Esophagus muscularis mucosa (tissue), 4 donors: ENCODE measurements at regions of chr2 and their contacts with region 1.

Region 1: DNA sequence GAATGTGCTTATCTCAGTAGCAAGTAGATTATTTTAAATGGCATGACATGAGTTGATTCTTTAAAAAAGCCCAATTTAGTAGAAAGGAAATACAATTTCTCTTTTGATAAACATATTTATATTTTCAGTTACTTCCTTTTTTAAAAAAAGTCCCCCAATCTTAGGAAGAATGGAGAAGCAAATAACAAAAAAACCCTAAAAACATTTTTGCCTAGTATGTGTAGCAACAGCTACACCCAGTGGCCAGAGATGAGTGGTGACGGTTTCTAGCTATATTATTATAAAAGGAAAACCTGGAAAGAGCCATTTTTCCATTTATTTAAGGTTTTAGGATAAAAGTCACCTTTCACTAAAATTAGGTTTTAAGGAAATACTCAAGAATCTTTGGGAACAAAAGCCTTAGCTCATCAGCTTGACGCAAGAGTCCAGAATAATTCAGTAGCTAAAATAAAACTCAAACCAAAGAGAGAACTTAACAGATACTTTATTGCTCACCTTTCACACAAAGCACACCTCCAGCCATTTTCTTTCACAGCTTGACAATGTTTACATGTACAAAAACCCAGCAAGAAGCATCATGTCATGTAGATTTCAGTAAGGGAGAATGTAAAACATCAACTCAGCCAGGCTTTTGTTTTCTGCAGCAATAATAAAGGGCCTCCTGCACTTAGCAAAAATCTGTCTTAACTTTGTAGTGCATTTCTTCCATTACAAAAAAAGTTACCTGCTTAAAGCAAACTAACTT is 15.7 kb downstream of the FAM98A start:
- DNase-seq: no peak
- H3K4me3 ChIP-seq: no peak overlapping the region
- H3K27ac ChIP-seq: peak overlapping the region in 2 of 4 donors; percentile 5 to 46
- H3K4me1 ChIP-seq: peaks cover 7 to 42% (median 36%) of the 10 kb centered on the region in 4 donors
- H3K27me3 ChIP-seq: no peaks in the 10 kb centered on the region
- CTCF ChIP-seq: peak; percentile 80 to 91 (median 88)
- EP300 ChIP-seq: no peak
- POLR2A ChIP-seq: no peak

Region 2: DNA sequence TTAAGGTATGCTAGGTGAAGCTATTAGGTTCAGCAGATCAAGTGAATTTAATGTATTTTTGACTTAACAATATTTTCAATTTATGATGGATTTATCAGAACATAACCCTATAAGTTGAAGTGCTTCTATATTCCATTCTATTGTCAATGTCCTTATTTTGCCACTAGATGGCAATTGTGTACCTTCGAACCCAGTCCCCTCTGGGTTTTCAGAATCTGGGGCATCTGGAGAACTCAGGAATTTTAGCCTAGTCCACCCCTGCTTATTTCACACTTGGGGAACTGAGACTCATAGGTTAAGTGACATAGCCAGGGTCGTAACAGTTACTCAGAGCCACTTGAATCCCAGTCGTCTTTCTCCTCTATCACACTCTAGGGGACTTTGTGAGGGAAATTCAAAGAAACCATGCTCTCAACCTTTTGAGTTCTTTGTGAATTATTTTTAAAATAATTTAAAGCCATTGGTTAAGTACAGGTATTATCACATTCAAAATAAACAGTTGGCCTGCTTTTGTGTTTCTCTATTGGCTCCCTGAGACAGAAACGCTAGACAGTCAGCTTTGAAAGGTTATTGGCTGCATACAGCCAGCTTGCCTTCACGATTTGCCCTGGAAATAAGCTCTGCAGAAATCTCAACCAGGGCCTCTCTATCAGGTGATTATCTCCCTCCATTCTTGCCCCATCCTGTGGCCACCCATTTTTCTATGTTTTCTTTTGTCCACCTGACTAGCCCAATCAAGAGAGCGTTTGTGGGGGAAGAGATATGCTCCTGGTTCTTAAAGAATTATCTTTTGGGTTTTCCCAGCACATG is 810.5 kb before region 1 on chr2:
- intact Hi-C with region 1: loop called (anchors 5 kb)
- DNase-seq: no peak
- H3K4me3 ChIP-seq: no peak overlapping the region
- H3K27ac ChIP-seq: peak overlapping the region in 3 of 4 donors; percentile 12 to 35 (median 13)
- H3K4me1 ChIP-seq: peaks cover 10 to 14% (median 11%) of the 10 kb centered on the region in 4 donors
- H3K27me3 ChIP-seq: no peaks in the 10 kb centered on the region
- CTCF ChIP-seq: peak; percentile 71 to 81 (median 74)
- EP300 ChIP-seq: no peak
- POLR2A ChIP-seq: no peak

Region 3: GRCh38 chr2:32946314-32947075 is 636.9 kb before region 1 on chr2 and contains the start of gene LTBP1:
- intact Hi-C with region 1: loop called (anchors 10 kb)
- DNase-seq: peak; percentile 92
- H3K4me3 ChIP-seq: peak within 1 kb of the TSS; percentile 76 to 93 (median 81)
- H3K27ac ChIP-seq: peak within 1 kb of the TSS; percentile 93 to 98 (median 95)
- H3K4me1 ChIP-seq: peaks cover 15 to 32% (median 25%) of the 10 kb centered on the region in 4 donors
- H3K27me3 ChIP-seq: no peaks in the 10 kb centered on the region
- CTCF ChIP-seq: peak; percentile 62 to 77 (median 72)
- EP300 ChIP-seq: no peak
- POLR2A ChIP-seq: no peak
- total RNA-seq, gene LTBP1: 254 to 465 (median 368) TPM

Region 4: DNA sequence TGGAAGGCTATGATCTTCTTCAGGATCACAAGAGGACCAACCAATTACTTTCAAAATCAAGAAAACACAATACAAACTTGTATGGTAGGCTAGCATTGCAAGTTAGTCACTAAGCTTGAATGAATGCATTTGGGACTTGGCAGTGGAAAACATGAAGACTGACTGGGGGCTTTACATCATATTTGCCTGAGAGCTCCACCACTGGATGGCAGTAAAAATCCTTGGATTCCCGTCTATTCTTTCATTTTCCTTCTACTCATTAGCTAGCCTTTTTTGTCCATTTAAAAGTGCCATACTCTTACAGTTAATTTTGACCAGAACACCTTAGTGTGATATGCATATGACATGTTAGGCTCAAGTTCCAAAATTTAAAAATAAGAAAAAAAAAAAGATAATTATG is 170.4 kb before region 1 on chr2:
- intact Hi-C with region 1: loop called (anchors 5 kb)
- DNase-seq: no peak
- H3K4me3 ChIP-seq: no peak overlapping the region
- H3K27ac ChIP-seq: no peak overlapping the region
- H3K4me1 ChIP-seq: peaks cover 0 to 3% (median 0%) of the 10 kb centered on the region in 4 donors
- H3K27me3 ChIP-seq: no peaks in the 10 kb centered on the region
- CTCF ChIP-seq: peak; percentile 26 to 51 (median 30)
- EP300 ChIP-seq: no peak
- POLR2A ChIP-seq: no peak

Region 5: DNA sequence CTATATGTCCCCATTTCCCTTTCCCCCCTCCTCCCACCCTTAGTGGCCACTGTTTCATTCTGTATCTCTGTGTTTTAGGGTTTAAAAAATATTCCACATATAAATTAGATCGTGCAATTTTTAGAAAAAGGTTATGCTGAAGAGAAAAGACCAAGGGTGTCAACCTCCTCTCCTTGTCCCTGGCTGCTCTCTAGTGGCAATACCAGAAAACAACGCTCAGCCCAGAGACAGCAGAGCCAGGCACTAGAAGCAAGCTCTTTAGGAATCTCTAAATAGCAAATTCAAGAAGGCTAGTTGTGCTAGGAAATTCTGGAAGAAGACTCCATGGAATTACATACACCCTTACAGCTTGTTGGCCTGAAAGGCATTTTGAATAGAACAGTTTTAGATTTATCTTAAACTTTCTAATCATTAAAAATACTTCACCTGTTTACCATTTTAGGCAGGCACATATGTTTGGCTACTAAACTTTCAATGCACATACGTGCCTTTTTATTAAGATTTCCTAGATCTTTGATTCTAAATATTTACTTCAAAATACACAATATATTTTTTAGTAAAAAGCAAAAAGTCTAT is 142.0 kb before region 1 on chr2:
- intact Hi-C with region 1: no loop called
- DNase-seq: no peak
- H3K4me3 ChIP-seq: no peak overlapping the region
- H3K27ac ChIP-seq: peak overlapping the region in 1 of 4 donors; percentile 21
- H3K4me1 ChIP-seq: peaks cover 22 to 48% (median 32%) of the 10 kb centered on the region in 4 donors
- H3K27me3 ChIP-seq: no peaks in the 10 kb centered on the region
- CTCF ChIP-seq: peak; percentile 70 to 83 (median 83)
- EP300 ChIP-seq: no peak
- POLR2A ChIP-seq: no peak

Region 6: GRCh38 chr2:33475224-33476130 is 107.9 kb before region 1 on chr2:
- intact Hi-C with region 1: loop called (anchors 5 kb)
- DNase-seq: peak; percentile 94
- H3K4me3 ChIP-seq: peak overlapping the region; percentile 62 to 75 (median 68)
- H3K27ac ChIP-seq: peak overlapping the region; percentile 85 to 91 (median 88)
- H3K4me1 ChIP-seq: peaks cover 21 to 28% (median 25%) of the 10 kb centered on the region in 4 donors
- H3K27me3 ChIP-seq: no peaks in the 10 kb centered on the region
- CTCF ChIP-seq: peak; percentile 77 to 84 (median 80)
- EP300 ChIP-seq: no peak
- POLR2A ChIP-seq: no peak

Region 7: DNA sequence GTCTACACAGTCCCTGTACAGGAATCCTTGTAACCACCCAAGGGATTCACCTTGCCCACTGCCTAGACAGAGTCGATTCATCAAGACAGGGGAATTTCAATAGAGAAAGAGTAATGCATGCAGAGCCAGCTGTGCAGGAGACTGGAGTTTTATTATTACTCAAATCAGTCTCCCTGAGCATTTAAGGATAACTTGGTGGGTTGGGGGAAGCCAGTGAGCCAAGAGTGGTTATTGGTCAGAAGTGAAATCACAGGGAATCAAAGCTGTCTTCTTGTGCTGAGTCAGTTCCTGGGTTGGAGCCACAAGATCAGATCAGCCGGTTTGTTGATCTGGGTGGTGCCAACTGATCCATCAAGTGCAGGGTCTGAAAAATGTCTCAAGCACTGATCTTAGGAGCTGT is 33.5 kb after region 1 on chr2:
- intact Hi-C with region 1: no loop called
- DNase-seq: no peak
- H3K4me3 ChIP-seq: no peak overlapping the region
- H3K27ac ChIP-seq: no peak overlapping the region
- H3K4me1 ChIP-seq: peaks cover 0 to 4% (median 0%) of the 10 kb centered on the region in 4 donors
- H3K27me3 ChIP-seq: no peaks in the 10 kb centered on the region
- CTCF ChIP-seq: no peak
- EP300 ChIP-seq: no peak
- POLR2A ChIP-seq: no peak

Region 8: GRCh38 chr2:33848486-33848885 is 265.1 kb after region 1 on chr2:
- intact Hi-C with region 1: no loop called
- DNase-seq: no peak
- H3K4me3 ChIP-seq: no peak overlapping the region
- H3K27ac ChIP-seq: no peak overlapping the region
- H3K4me1 ChIP-seq: no peaks in the 10 kb centered on the region
- H3K27me3 ChIP-seq: no peaks in the 10 kb centered on the region
- CTCF ChIP-seq: no peak
- EP300 ChIP-seq: no peak
- POLR2A ChIP-seq: no peak